ENCODE measurements at regions of chr14 and their contacts with region 1.

Region 1: DNA sequence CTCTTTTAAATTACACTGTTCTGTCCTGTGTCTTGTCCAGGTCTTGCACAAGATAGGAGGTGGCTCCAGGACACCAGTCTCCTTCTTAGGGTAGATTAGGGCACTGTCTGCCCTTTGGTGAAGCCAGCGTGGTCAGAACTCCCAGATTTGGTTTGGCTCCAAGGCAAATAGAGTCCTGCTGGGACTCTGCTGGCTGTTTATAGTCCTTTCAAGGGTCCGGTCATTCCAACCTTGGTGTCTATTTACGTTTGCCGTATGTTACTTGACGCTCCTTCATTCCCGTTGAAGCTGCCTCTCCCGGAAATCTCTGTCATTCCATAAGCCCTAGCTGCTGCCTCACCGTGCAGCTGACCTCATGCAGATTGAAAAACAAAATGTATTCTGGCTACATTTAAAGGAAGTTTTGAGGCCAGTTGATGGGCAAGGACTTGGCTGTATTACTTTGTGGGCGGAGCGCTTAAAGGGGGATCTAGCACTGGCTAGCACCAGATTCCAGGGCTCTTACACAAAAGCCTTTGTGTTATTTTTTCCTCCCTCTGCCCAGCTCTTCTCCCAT is 180.6 kb downstream of the AKAP6 start:
- DNase-seq: peak; percentile 60
- ATAC-seq: peak; percentile 92

Region 2: DNA sequence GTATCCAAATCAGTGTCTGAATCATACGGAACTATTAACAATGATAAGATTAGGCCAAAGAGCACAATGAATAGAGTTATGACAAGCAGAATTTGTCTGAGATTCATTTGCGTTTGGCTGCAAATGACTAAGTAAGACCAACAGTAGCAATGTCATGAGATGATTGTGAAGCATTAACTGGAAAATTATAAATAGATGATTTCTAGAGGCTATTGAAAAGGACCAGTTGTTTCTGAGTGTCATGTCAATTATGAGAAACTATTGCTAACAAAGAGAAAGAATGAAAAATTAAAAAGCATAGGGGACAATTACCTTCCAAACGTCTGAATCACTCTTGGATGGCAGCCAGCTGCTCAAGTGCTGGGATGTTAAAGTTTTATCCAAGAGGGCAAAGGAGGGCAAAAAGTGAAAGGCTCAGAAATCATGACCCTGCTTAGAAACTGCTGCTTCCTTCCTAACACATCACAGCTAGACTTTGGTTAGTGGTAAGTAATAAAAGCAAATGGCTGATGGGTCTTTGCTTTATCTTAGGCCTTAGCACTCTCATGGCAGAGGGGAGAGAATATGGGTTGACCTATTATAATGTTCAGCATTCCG is 91.7 kb before region 1 on chr14:
- intact Hi-C with region 1: loop called (anchors 10 kb)
- DNase-seq: no peak
- ATAC-seq: no peak

Region 3: GRCh38 chr14:32494609-32495434 is 14.9 kb before region 1 on chr14:
- intact Hi-C with region 1: loop called (anchors 2 kb)
- DNase-seq: no peak
- ATAC-seq: peak; percentile 94